ENCODE measurements at regions of chr4 and their contacts with region 1.

Region 1: DNA sequence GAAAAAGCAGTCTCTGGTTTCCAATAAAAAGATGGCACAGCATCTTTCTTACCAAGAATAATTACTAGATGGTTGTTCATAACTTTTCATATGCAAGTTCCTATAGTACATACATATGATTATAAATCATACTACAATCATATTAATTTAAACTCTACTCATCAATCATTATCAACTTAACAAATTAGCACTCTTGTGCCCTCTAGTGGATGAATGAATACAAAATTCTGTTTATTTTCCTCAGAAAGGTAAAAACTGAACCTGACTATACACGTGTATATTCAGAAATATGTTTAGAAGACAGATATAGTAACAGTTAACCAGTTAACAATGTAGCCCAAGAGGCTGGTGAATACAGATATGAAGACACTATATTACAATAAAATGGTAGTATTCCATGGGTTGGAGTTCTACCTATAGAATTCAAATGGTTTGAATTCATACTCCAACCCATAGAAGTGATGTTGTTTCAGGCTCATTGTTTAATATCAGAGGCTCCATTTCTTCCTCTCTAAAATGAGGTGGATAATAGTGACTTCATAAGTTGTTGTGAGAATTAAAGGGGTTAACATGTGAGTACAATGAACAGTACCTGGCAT is 100.0 kb downstream of the ADAMTS3 start:
- DNase-seq: no peak
- H3K4me3 ChIP-seq: no peak overlapping the region
- H3K27ac ChIP-seq: no peak overlapping the region
- H3K4me1 ChIP-seq: no peaks in the 10 kb centered on the region
- H3K27me3 ChIP-seq: no peaks in the 10 kb centered on the region
- CTCF ChIP-seq: peak in 6 of 11 experiments; percentile 23 to 44 (median 30)
- POLR2A ChIP-seq: no peak

Region 2: DNA sequence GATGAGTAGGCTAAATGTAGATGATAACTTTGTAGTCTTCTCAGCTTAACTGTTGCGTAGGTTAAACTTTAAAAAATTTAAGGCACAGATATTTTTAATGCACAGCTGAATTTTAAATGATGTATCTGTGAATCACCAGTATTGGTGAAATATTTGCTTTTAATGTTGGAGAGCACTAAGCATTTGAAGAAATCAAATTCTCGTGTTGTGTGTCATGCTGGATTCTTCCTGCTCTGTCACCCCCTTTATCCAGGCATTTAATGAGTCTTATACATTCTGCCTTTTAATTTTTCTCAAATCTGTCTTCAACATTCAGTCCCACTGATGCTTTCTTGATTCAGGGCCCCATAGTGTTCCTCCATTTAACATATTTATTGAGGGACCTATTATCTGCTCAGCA is 1053.5 kb before region 1 on chr4:
- intact Hi-C with region 1: no loop called
- DNase-seq: no peak
- H3K4me3 ChIP-seq: no peak overlapping the region
- H3K27ac ChIP-seq: no peak overlapping the region
- H3K4me1 ChIP-seq: no peaks in the 10 kb centered on the region
- H3K27me3 ChIP-seq: no peaks in the 10 kb centered on the region
- CTCF ChIP-seq: no peak
- POLR2A ChIP-seq: no peak

Region 3: GRCh38 chr4:72338060-72338459 is 130.9 kb before region 1 on chr4:
- intact Hi-C with region 1: loop called (anchors 10 kb)
- DNase-seq: no peak
- H3K4me3 ChIP-seq: no peak overlapping the region
- H3K27ac ChIP-seq: no peak overlapping the region
- H3K4me1 ChIP-seq: no peaks in the 10 kb centered on the region
- H3K27me3 ChIP-seq: no peaks in the 10 kb centered on the region
- CTCF ChIP-seq: no peak
- POLR2A ChIP-seq: no peak

Region 4: DNA sequence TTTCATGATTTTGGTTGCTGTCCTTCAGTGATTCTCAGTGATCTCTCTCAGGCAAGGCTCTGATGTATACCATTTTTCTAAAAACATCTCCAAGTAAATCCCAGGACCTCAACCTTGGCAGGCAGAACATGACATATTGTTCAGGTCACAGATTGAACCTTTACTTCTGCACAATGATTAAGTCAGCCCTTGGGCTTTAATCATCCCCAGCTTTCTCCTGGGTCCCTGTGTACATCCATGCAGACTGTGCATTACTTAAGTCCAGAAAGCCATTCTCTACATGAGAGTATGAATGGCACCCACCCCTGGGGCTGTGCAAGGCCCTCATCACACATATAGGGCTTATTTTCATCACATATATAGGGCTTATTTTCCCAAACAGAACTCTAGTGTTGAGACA is 158.7 kb after region 1 on chr4:
- intact Hi-C with region 1: no loop called
- DNase-seq: no peak
- H3K4me3 ChIP-seq: no peak overlapping the region
- H3K27ac ChIP-seq: no peak overlapping the region
- H3K4me1 ChIP-seq: no peaks in the 10 kb centered on the region
- H3K27me3 ChIP-seq: no peaks in the 10 kb centered on the region
- CTCF ChIP-seq: no peak
- POLR2A ChIP-seq: no peak